ENCODE measurements at regions of chr3 and their contacts with region 1.

Region 1: GRCh38 chr3:122356415-122356814 is 26.6 kb downstream of the MIX23 start:
- DNase-seq: peak in 6 of 9 donors; percentile 6 to 32 (median 21)
- ATAC-seq: peak; percentile 36
- H3K4me3 ChIP-seq: no peak overlapping the region
- H3K4me3 Mint-ChIP-seq: no peak overlapping the region
- H3K27ac ChIP-seq: no peak overlapping the region
- H3K27ac Mint-ChIP-seq: no peak overlapping the region
- H3K4me1 ChIP-seq: no peaks in the 10 kb centered on the region
- H3K4me1 Mint-ChIP-seq: peaks cover 0 to 13% (median 0%) of the 10 kb centered on the region in 7 donors
- H3K27me3 ChIP-seq: no peaks in the 10 kb centered on the region
- H3K27me3 Mint-ChIP-seq: peaks cover 0 to 1% (median 0%) of the 10 kb centered on the region in 5 donors

Region 2: DNA sequence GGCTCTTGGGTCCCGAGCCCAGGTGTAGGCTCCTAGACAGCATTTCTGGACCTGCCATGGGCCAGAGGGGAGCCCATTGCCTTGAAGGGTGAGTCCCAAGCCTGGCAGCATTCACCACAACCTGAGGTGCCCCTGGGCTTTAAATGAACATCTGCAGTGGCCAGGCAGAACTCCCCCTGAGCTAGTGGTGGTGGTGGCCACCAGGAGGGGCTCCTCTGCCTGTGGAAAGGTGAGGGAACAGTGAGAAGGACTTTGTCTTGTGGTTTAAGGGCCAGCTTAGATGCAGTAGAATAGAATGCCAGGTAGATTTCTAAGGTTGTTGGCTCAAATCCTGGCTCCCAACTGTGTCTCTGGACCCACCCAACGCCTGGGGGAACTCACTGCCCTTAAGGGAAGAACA is 117.3 kb before region 1 on chr3:
- CTCF ChIA-PET with region 1: no interaction called
- POLR2A ChIA-PET with region 1: no interaction called
- intact Hi-C with region 1: loop called in 1 of 2 experiments (anchors 2 kb)
- DNase-seq: no peak
- ATAC-seq: no peak
- H3K4me3 ChIP-seq: no peak overlapping the region
- H3K4me3 Mint-ChIP-seq: no peak overlapping the region
- H3K27ac ChIP-seq: no peak overlapping the region
- H3K27ac Mint-ChIP-seq: no peak overlapping the region
- H3K4me1 ChIP-seq: no peaks in the 10 kb centered on the region
- H3K4me1 Mint-ChIP-seq: no peaks in the 10 kb centered on the region
- H3K27me3 ChIP-seq: no peaks in the 10 kb centered on the region
- H3K27me3 Mint-ChIP-seq: peaks cover 35 to 49% (median 39%) of the 10 kb centered on the region in 5 donors

Region 3: GRCh38 chr3:122305818-122306621 is 50.4 kb before region 1 on chr3:
- CTCF ChIA-PET with region 1: interaction called, 9 read pairs
- POLR2A ChIA-PET with region 1: no interaction called
- intact Hi-C with region 1: loop called (anchors 1 to 2 kb)
- DNase-seq: no peak
- ATAC-seq: no peak
- H3K4me3 ChIP-seq: no peak overlapping the region
- H3K4me3 Mint-ChIP-seq: no peak overlapping the region
- H3K27ac ChIP-seq: no peak overlapping the region
- H3K27ac Mint-ChIP-seq: no peak overlapping the region
- H3K4me1 ChIP-seq: no peaks in the 10 kb centered on the region
- H3K4me1 Mint-ChIP-seq: peaks cover 0 to under 1% (median 0%) of the 10 kb centered on the region in 7 donors
- H3K27me3 ChIP-seq: no peaks in the 10 kb centered on the region
- H3K27me3 Mint-ChIP-seq: peaks cover 0 to 12% (median 5%) of the 10 kb centered on the region in 5 donors

Measured in naive thymus-derived CD4-positive, alpha-beta T cell (primary cell).